Activated CD8-positive, alpha-beta T cell treated with anti-CD3 and anti-CD28 coated beads for 36 hours (primary cell): ENCODE measurements at regions of chr1 and their contacts with region 1.

Region 1: DNA sequence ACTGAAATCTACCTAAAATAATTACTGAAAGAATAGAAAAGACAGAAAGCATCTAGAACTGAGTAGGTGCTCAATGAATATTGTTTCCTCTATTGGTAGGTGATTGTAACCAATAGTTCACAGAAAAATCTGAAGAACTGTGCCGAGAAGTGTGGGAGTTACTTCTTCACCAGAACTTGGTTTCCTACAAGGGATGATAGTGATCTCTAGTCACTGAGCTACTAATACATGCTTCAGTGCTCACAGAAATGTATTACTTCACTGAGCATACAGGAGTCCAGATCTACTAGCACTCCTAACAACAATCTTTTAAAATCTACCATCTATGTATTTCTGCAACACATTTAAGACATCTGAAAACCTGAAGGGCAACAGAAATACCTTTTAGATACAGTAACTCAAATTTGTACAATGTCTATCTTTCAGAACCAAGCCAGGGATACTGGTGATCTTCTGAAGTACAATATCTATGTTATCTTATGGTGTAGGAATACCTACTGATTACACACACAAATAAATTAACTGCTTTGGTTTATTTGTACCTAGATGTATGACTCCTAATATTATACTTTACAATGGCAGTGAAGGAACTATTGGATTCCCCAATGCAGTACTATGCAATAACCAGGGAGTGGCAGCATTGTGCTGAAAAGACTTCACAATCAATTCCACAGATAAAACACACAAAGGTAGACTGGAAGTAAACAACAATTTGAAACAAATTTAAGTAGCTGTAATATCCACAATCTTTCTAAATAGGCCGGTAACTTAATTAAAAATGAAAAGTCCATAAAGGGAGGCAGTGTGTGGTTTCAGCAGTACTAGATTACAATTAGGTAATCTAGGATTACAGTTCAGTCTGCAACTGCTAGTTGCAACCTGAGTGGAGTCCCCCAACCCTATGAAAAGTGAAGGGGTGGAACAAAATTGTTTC is 243.0 kb downstream of the SLC45A1 start:
- DNase-seq: peak; percentile 25
- ATAC-seq: peak; percentile 83
- H3K4me3 Mint-ChIP-seq: no peak overlapping the region
- H3K27ac Mint-ChIP-seq: peak overlapping the region; percentile 3
- H3K4me1 Mint-ChIP-seq: peaks cover 24% of the 10 kb centered on the region
- H3K27me3 Mint-ChIP-seq: no peaks in the 10 kb centered on the region
- CTCF ChIP-seq: peak; percentile 96

Region 2: DNA sequence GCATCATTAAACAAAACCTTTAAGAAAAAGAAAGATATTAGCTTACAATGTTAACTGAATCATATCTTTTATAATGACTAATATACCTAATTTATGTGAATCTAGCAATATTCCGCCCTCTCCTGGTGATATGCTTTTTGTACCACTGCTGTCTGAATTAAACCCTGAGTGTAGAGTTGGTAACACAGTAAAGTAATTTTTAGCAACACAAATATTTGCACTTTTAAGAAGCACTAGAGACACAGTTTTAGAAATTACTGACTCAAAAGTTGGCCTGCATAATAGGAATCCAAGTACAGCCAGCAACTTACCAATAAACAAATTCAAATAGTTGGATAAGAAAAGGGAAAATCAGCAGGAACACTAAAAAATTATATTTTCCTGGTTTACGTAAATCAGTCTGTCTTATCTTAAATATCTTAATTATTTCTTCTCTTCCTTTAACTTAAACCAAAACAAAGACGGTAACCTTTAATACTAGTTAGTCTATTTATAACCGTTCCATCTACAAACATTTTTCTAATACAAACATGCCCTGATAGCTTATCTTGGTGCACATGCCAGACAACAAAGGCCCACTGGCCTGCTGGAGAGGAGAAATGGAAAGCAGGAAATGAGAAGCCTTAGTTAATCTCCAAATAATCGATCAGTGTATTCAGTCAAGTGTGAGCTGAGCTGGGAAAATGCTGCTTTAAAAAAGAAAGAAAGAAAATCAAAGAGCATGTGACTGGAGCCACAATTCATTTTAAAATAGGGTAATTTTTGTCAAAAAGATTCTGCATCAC is 10.5 kb after region 1 on chr1:
- CTCF ChIA-PET with region 1: interaction called, 32 read pairs
- POLR2A ChIA-PET with region 1: interaction called, 3 read pairs
- intact Hi-C with region 1: no loop called
- DNase-seq: no peak
- ATAC-seq: no peak
- H3K4me3 Mint-ChIP-seq: no peak overlapping the region
- H3K27ac Mint-ChIP-seq: no peak overlapping the region
- H3K4me1 Mint-ChIP-seq: peaks cover 5% of the 10 kb centered on the region
- H3K27me3 Mint-ChIP-seq: no peaks in the 10 kb centered on the region
- CTCF ChIP-seq: peak; percentile 10

Region 3: DNA sequence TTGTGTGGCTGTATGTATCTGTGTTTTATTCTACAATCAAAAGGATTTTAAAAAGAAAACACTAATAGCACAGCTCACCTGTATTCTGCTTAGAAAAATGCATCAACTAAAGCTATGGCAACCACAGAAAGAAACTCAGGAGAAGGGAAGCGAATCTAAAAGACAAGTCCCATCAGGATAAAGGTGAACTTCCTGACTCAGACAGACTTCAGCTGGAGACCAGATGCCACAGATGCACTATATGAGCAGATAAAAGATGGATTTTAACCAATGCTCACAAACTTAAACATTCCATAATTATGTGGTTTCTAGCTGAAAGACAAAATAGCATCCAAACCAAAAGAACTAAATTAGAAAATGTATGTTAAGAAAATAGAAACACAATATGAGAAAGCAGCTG is 25.6 kb after region 1 on chr1:
- CTCF ChIA-PET with region 1: interaction called, 13 read pairs
- POLR2A ChIA-PET with region 1: no interaction called
- intact Hi-C with region 1: no loop called
- DNase-seq: no peak
- ATAC-seq: no peak
- H3K4me3 Mint-ChIP-seq: no peak overlapping the region
- H3K27ac Mint-ChIP-seq: no peak overlapping the region
- H3K4me1 Mint-ChIP-seq: peaks cover 26% of the 10 kb centered on the region
- H3K27me3 Mint-ChIP-seq: no peaks in the 10 kb centered on the region
- CTCF ChIP-seq: no peak

Region 4: DNA sequence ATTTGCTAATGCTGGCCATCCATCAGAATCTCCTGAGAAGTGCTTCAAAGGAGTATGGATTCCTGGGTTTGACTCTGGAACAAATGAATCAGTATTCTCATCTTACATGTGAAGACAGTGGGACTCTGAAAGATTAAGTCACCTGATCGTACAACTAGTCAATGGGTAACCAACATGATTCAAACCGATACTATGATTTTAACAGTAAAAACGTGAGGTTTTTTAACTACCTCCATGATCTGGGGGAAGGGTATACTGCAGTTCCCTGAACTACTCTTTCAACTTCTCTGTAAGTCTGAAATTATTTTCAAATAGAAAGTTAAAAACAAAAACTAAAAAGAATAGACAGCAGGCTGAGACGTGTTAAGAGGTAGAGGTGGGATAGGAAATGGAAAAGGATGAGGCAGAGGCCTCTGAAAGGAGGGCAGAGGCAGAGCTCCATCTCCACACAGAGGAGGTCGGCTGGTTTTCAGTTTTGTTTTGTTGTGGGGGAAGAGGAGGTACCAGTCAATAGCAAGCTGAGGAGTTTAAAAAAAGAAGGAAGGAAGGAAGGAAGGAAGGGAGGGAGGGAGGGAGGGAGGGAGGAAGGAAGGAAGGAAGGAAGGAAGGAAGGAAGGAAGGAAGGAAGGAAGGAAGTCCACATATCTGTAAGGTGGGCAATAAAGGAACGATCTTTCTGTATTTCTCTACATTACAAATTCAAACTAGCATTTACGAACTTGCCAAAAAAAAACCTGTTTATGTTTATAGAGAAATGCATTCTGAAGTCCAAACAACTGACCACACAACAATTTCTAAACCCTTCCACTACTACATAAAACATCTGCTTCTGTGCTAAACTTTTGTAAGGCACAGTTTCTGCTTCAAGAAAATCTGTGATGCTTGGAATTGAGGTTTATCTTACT is 43.4 kb after region 1 on chr1:
- CTCF ChIA-PET with region 1: interaction called, 7 read pairs
- POLR2A ChIA-PET with region 1: no interaction called
- intact Hi-C with region 1: loop called (anchors 5 kb)
- DNase-seq: peak; percentile 64
- ATAC-seq: peak; percentile 89
- H3K4me3 Mint-ChIP-seq: peak overlapping the region; percentile 69
- H3K27ac Mint-ChIP-seq: peak overlapping the region; percentile 94
- H3K4me1 Mint-ChIP-seq: peaks cover 53% of the 10 kb centered on the region
- H3K27me3 Mint-ChIP-seq: no peaks in the 10 kb centered on the region
- CTCF ChIP-seq: no peak

Region 5: GRCh38 chr1:8660411-8660828 is 99.5 kb after region 1 on chr1:
- CTCF ChIA-PET with region 1: interaction called, 5 read pairs
- POLR2A ChIA-PET with region 1: no interaction called
- intact Hi-C with region 1: loop called (anchors 10 kb)
- DNase-seq: no peak
- ATAC-seq: no peak
- H3K4me3 Mint-ChIP-seq: no peak overlapping the region
- H3K27ac Mint-ChIP-seq: no peak overlapping the region
- H3K4me1 Mint-ChIP-seq: peaks cover 3% of the 10 kb centered on the region
- H3K27me3 Mint-ChIP-seq: no peaks in the 10 kb centered on the region
- CTCF ChIP-seq: no peak

Region 6: GRCh38 chr1:8671306-8671917 is 110.5 kb after region 1 on chr1:
- CTCF ChIA-PET with region 1: interaction called, 67 read pairs
- POLR2A ChIA-PET with region 1: interaction called, 4 read pairs
- intact Hi-C with region 1: loop called (anchors 10 kb)
- DNase-seq: peak; percentile 18
- ATAC-seq: no peak
- H3K4me3 Mint-ChIP-seq: no peak overlapping the region
- H3K27ac Mint-ChIP-seq: no peak overlapping the region
- H3K4me1 Mint-ChIP-seq: peaks cover 44% of the 10 kb centered on the region
- H3K27me3 Mint-ChIP-seq: no peaks in the 10 kb centered on the region
- CTCF ChIP-seq: peak; percentile 81

Region 7: GRCh38 chr1:8702850-8703810 is 142.3 kb after region 1 on chr1:
- CTCF ChIA-PET with region 1: interaction called, 14 read pairs
- POLR2A ChIA-PET with region 1: interaction called, 3 read pairs
- intact Hi-C with region 1: no loop called
- DNase-seq: peak; percentile 75
- ATAC-seq: peak; percentile 68
- H3K4me3 Mint-ChIP-seq: peak overlapping the region; percentile 88
- H3K27ac Mint-ChIP-seq: peak overlapping the region; percentile 70
- H3K4me1 Mint-ChIP-seq: peaks cover 31% of the 10 kb centered on the region
- H3K27me3 Mint-ChIP-seq: peaks cover 32% of the 10 kb centered on the region
- CTCF ChIP-seq: no peak